Activated CD4-positive, alpha-beta T cell treated with anti-CD3 and anti-CD28 coated beads for 36 hours (primary cell): ENCODE measurements at regions of chr1 and their contacts with region 1.

Region 1: DNA sequence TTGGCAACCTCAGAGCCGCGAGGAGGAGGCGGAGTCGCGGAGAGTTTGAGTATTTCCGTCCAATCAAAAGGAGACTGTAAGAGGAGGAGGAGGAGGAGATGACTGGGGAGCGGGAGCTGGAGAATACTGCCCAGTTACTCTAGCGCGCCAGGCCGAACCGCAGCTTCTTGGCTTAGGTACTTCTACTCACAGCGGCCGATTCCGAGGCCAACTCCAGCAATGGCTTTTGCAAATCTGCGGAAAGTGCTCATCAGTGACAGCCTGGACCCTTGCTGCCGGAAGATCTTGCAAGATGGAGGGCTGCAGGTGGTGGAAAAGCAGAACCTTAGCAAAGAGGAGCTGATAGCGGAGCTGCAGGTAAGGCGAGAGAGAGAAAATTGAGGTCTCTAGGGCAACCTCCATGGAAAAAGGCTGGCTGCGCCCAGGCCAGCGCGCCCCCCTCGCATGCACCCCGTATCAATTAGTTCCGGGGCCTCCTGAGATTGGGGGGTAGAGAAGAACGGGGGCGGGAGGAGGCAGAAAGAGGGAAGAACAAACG is at the start of gene PHGDH:
- DNase-seq: peak; percentile 85
- ATAC-seq: peak; percentile 91
- H3K4me3 Mint-ChIP-seq: peak within 1 kb of the TSS; percentile 95
- H3K27ac Mint-ChIP-seq: peak within 1 kb of the TSS; percentile 96
- H3K4me1 Mint-ChIP-seq: peaks cover 30% of the 10 kb centered on the region
- H3K27me3 Mint-ChIP-seq: peaks cover 9% of the 10 kb centered on the region
- total RNA-seq, gene PHGDH: 198 to 259 TPM

Region 2: DNA sequence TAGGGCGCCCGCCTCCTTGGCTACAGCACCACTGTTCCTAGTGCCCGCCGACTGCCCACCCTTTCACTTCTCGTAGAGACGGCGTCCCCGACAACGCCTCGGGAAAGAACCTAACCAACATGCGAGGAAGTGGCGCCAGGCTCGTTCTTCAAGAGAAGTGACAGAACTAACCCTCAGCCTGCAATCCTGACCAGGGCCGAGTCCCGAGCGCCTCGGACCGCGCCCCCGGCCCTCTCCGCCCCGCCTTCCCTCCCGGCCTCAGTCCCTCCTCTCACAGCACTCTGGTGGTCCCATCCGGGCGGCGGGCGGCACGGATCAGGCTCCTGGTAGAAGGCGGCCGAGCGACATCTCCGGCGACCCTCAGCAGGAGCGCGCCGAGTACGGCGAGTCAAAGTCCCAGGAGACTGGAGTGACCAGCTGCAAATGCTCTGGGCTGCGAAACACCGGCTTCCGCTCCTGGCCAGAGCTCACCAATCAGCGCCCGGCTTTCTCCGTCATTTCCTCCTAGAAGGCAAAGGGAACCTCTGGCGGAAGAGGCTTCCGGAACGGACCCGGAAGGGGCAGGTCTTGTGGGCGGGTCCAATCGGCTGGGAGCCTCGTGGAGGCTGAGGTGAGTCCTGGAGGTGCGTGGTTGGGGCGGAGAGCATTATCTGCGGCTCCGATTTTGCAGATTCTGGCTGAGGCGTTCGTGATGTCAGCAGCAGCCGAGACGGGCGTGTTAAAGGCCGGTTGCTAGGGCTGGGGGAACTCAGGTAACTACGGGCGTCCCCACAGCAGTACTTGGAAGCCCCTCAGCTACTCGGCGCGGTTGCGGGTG is 1782.5 kb before region 1 on chr1 and contains the starts of genes GDAP2 and WDR3:
- CTCF ChIA-PET with region 1: no interaction called
- POLR2A ChIA-PET with region 1: no interaction called
- intact Hi-C with region 1: loop called in 1 of 2 experiments (anchors 5 kb)
- DNase-seq: peak; percentile 98
- ATAC-seq: peak; percentile 97
- H3K4me3 Mint-ChIP-seq: peak within 1 kb of the TSS; percentile 94
- H3K27ac Mint-ChIP-seq: peak within 1 kb of the TSS; percentile 90
- H3K4me1 Mint-ChIP-seq: peaks cover 54% of the 10 kb centered on the region
- H3K27me3 Mint-ChIP-seq: no peaks in the 10 kb centered on the region
- total RNA-seq, gene GDAP2: 18.8 to 20.9 TPM
- total RNA-seq, gene WDR3: 45.0 to 63.7 TPM

Region 3: DNA sequence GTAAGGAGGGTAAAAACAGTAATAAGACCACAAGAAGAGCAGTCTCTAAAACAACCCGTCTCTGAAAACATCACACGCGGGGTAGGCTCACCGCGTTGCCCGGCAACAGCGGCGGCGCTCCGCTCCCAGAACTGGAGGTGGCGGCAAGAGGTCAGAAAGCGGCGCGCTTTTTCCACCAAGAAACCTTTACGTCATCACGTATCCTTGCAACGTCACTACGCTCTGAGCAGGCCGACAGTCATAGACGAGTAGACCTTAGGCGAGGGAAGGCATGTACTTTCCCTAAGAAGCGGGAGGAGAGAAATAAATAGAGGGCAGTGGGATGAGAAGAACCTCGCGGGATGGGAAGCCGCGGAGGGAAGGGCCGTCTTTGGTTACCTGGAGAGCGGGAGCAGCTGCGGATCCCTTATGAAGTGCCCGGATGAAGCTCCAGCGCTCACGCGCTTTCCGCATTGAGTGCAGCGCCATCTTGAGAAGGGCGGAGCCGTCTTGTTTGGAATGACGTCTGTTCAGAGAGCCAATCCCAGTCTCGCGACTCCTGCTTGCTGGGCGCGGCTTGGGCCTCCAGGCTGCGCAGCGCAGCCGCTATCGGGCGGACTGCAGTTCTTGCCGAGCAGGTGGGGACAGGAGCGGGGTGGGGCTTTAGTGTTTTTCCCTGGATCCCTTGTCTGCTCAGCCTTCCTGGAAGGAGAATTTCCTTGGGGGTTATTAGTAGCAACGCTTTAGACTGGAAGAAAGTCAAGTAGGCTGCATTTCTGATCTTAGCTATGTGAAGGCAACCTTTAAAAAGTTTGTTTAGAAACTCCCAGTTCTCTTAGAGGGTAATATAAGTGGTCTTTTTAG is 571.5 kb before region 1 on chr1 and contains the start of gene WARS2:
- CTCF ChIA-PET with region 1: no interaction called
- POLR2A ChIA-PET with region 1: no interaction called
- intact Hi-C with region 1: loop called in 1 of 2 experiments (anchors 5 kb)
- DNase-seq: peak; percentile 94
- ATAC-seq: peak; percentile 95
- H3K4me3 Mint-ChIP-seq: no peak within 1 kb of the TSS
- H3K27ac Mint-ChIP-seq: no peak within 1 kb of the TSS
- H3K4me1 Mint-ChIP-seq: peaks cover 13% of the 10 kb centered on the region
- H3K27me3 Mint-ChIP-seq: no peaks in the 10 kb centered on the region
- total RNA-seq, gene WARS2: 16.0 to 25.2 TPM

Region 4: GRCh38 chr1:119647734-119648619 is 63.9 kb before region 1 on chr1 and contains the start of gene ZNF697:
- CTCF ChIA-PET with region 1: no interaction called
- POLR2A ChIA-PET with region 1: no interaction called
- intact Hi-C with region 1: loop called in 1 of 2 experiments (anchors 5 kb)
- DNase-seq: peak; percentile 72
- ATAC-seq: peak; percentile 87
- H3K4me3 Mint-ChIP-seq: peak within 1 kb of the TSS; percentile 66
- H3K27ac Mint-ChIP-seq: no peak within 1 kb of the TSS
- H3K4me1 Mint-ChIP-seq: peaks cover 17% of the 10 kb centered on the region
- H3K27me3 Mint-ChIP-seq: peaks cover 67% of the 10 kb centered on the region
- total RNA-seq, gene ZNF697: 0.50 to 0.63 TPM

Region 5: GRCh38 chr1:119727996-119728395 is 16.1 kb after region 1 on chr1:
- CTCF ChIA-PET with region 1: no interaction called
- POLR2A ChIA-PET with region 1: no interaction called
- intact Hi-C with region 1: loop called in 1 of 2 experiments (anchors 1 kb)
- DNase-seq: no peak
- ATAC-seq: no peak
- H3K4me3 Mint-ChIP-seq: no peak overlapping the region
- H3K27ac Mint-ChIP-seq: no peak overlapping the region
- H3K4me1 Mint-ChIP-seq: peaks cover 7% of the 10 kb centered on the region
- H3K27me3 Mint-ChIP-seq: no peaks in the 10 kb centered on the region